H1 (cell line): ENCODE measurements at regions of chr4 and their contacts with region 1.

Region 1: GRCh38 chr4:165384598-165384997 is 5.8 kb downstream of the CPE start:
- DNase-seq: no peak
- H3K4me3 ChIP-seq: no peak overlapping the region
- H3K27ac ChIP-seq: no peak overlapping the region
- H3K4me1 ChIP-seq: peaks cover 0 to 4% (median 3%) of the 10 kb centered on the region in 4 experiments; a peak in 3 of 7 replicates
- H3K27me3 ChIP-seq: peaks cover 0 to 7% (median 4%) of the 10 kb centered on the region in 4 experiments; a peak in 2 of 7 replicates
- CTCF ChIP-seq: peak in 1 of 3 experiments; percentile 38; a peak in 2 of 4 replicates
- EP300 ChIP-seq: no peak
- POLR2A ChIP-seq: no peak
- RAD21 ChIP-seq: 0 out of 4 replicates have a peak, but pooled peaks of 1 of the 2 experiments have one; percentile 6

Region 2: GRCh38 chr4:165222651-165222994 is 162.0 kb before region 1 on chr4:
- CTCF ChIA-PET with region 1: no interaction called
- POLR2A ChIA-PET with region 1: no interaction called
- DNase-seq: no peak
- H3K4me3 ChIP-seq: no peak overlapping the region
- H3K27ac ChIP-seq: no peak overlapping the region
- H3K4me1 ChIP-seq: peaks cover 0 to 2% (median 0%) of the 10 kb centered on the region in 4 experiments; a peak in 1 of 7 replicates
- H3K27me3 ChIP-seq: no peaks in the 10 kb centered on the region
- CTCF ChIP-seq: no peak
- EP300 ChIP-seq: no peak
- POLR2A ChIP-seq: no peak
- RAD21 ChIP-seq: no peak

Region 3: DNA sequence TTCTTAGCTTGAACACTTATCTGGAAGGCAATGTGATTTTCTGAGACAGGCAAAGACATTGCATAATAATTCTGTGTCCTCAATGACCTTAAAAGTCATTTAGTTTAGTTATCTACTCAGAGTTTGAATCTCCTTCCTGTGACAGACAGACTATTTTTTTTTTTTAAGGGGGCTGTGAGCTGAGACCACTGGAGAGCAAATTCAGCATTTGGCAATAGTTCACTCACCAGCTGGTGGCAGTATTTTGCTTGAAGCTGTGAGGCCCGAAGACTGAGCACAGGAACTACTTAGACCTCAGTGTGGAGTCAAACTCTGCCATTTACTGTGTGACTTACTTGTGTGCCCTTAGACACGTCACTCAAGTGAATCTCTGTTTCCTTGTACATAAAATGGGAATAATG is 28.7 kb before region 1 on chr4:
- CTCF ChIA-PET with region 1: interaction called, 18 read pairs
- POLR2A ChIA-PET with region 1: no interaction called
- DNase-seq: no peak
- H3K4me3 ChIP-seq: no peak overlapping the region
- H3K27ac ChIP-seq: no peak overlapping the region
- H3K4me1 ChIP-seq: no peaks in the 10 kb centered on the region
- H3K27me3 ChIP-seq: no peaks in the 10 kb centered on the region
- CTCF ChIP-seq: peak; percentile 61 to 83 (median 69)
- EP300 ChIP-seq: no peak
- POLR2A ChIP-seq: no peak
- RAD21 ChIP-seq: peak; percentile 72 to 80

Region 4: GRCh38 chr4:165398570-165398969 is 14.0 kb after region 1 on chr4:
- CTCF ChIA-PET with region 1: interaction called, 12 read pairs
- POLR2A ChIA-PET with region 1: no interaction called
- DNase-seq: no peak
- H3K4me3 ChIP-seq: no peak overlapping the region
- H3K27ac ChIP-seq: no peak overlapping the region
- H3K4me1 ChIP-seq: no peaks in the 10 kb centered on the region
- H3K27me3 ChIP-seq: peaks cover 0 to 1% (median 0%) of the 10 kb centered on the region in 4 experiments; a peak in 1 of 7 replicates
- CTCF ChIP-seq: no peak
- EP300 ChIP-seq: no peak
- POLR2A ChIP-seq: no peak
- RAD21 ChIP-seq: no peak

Region 5: DNA sequence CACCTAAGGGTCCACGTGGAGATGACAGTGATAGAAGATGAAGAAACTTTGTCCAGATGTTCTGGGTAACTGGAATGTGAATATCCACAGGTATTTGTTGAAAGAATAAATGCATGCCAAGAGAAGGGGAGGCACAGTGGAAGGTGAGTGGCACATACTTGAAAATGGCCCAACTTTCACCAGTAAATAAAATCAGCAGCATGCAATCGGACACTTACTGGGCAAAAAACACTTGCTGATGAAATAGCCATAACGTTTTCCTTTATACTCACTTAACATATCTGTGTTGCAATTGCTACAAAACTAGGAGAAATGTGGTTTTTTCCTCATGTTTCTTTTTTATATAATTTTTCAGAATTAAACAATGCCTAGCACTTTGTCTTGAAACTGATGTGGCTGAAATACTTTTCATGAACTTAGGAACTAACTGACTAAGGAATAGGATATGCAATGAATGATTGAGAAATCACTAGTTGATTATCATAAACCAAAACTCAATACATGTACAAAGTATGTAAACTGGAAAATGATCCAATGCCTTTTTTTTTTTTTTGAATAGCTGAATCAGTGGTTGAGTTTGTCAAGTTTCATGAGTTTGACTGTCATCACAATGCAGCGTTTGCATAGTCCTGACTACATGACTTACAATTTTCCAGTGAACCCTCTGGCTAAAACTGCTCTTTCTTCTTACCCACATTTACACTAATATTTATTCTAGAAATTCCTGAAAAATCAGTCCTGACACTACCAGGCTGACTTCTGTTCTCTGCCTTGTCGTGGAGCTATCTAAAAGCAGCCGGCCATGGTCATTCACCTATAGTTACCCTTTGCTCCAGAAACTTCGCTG is 121.6 kb after region 1 on chr4:
- CTCF ChIA-PET with region 1: no interaction called
- POLR2A ChIA-PET with region 1: no interaction called
- DNase-seq: no peak
- H3K4me3 ChIP-seq: no peak overlapping the region
- H3K27ac ChIP-seq: no peak overlapping the region
- H3K4me1 ChIP-seq: no peaks in the 10 kb centered on the region
- H3K27me3 ChIP-seq: no peaks in the 10 kb centered on the region
- CTCF ChIP-seq: no peak
- EP300 ChIP-seq: no peak
- POLR2A ChIP-seq: no peak
- RAD21 ChIP-seq: no peak